ENCODE measurements at regions of chr2 and their contacts with region 1.

Region 1: GRCh38 chr2:169862816-169863215 is 35.6 kb downstream of the UBR3 start:
- DNase-seq: no peak
- CTCF ChIP-seq: no peak

Region 2: GRCh38 chr2:169877398-169877797 is 14.6 kb after region 1 on chr2:
- CTCF ChIA-PET with region 1: interaction called, 13 read pairs
- POLR2A ChIA-PET with region 1: no interaction called
- DNase-seq: peak; percentile 22
- CTCF ChIP-seq: peak; percentile 28

Region 3: DNA sequence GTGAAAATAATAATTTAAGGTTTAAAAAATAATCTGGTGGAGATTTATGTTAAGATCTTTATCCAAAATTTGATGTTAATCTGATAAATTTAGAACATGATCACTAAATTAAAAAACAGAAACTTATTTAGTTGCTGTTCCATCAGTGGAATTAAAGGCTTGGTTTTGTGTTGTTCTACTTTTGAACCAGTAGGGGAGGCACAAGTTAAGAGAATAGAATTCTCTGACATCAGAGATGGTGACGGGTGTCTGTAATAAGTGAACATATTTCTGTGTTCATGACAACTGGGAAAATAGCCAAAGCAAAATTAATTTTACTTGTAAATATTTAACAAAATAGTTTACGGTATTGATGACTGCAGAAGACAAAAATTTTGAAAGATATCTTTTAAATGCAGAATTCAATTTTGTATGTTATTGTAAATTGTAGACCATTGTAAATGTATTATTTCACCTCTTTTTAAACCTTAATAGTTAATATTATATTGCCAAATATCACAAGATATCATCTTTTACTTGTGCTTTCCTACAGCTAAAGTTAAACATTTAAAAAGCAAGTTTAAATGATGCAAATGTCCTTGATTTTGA is 70.4 kb after region 1 on chr2:
- CTCF ChIA-PET with region 1: no interaction called
- POLR2A ChIA-PET with region 1: no interaction called
- DNase-seq: peak; percentile 33
- CTCF ChIP-seq: peak; percentile 54

Measured in GM10248 (cell line).